Breast epithelium (tissue), 4 donors: ENCODE measurements at regions of chr7 and their contacts with region 1.

Region 1: DNA sequence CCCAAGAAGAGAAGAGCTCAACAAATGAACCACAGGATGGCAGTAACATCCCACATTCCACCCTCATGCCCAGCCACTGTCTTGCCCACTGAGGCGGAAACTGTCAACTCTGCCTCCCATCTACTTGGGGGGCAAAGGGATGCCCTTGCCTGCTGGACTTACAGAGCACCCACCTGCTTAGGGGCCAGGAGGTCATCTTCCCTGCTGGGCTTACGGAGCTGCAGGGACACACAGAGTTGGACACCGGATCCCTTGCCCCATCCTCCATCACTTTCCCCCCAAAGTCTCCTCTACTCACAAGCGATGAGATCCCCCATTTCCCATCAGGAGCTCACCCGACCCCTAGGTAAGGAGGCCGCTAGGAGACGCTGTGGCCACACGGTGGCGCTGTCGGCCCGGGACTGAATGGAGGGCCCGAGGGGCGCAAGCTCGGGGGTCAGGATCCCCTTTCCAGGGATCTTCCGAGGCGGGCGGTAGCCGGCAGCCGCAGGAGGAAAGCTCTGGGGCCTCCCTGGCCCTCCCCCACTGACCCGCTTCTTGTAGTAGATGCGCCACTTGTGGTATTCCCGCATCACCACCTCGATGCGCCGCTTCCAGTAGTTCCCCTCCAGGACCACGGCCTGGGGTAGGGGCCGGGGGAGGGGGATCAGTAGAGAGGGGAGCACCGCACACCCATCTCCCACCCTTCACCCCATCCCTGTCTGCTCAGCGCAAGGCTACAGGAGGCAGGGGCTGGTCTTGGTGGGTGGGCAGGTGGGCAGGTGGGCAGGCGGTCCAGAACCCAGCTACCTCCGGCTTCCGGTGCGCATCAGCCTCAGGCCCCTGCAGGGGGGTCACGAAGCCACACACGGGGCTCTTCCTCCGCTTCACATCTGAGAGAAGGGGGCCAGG is 17.3 kb downstream of the MLXIPL start:
- DNase-seq: no peak
- H3K4me3 ChIP-seq: peak overlapping the region in 1 of 3 donors; percentile 49
- H3K27ac ChIP-seq: no peak overlapping the region
- H3K4me1 ChIP-seq: no peaks in the 10 kb centered on the region
- H3K27me3 ChIP-seq: peaks cover 0 to 20% of the 10 kb centered on the region in 2 donors
- CTCF ChIP-seq: peak; percentile 55 to 94 (median 92)
- POLR2A ChIP-seq: no peak

Region 2: DNA sequence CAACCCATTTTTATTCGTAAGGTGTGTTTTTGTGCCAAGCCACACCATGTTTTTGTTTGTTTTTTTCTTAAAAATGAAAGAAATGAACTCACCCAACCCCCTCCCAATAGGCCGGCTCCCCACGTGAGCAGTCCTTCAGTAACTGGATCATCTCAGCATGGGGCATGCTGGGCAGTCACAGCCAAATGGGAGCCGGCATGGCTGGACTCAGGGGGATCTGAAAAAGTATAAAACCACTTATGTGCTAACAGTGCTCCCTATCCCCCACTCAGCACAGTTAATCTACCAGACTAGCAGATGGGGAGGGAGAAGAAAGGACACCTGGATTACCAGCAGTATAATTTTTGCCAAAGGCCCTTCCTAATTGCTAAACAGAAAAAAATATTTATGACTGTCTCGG is 124.3 kb before region 1 on chr7:
- intact Hi-C with region 1: no loop called
- DNase-seq: no peak
- H3K4me3 ChIP-seq: no peak overlapping the region
- H3K27ac ChIP-seq: no peak overlapping the region
- H3K4me1 ChIP-seq: no peaks in the 10 kb centered on the region
- H3K27me3 ChIP-seq: no peaks in the 10 kb centered on the region
- CTCF ChIP-seq: no peak
- POLR2A ChIP-seq: no peak

Region 3: DNA sequence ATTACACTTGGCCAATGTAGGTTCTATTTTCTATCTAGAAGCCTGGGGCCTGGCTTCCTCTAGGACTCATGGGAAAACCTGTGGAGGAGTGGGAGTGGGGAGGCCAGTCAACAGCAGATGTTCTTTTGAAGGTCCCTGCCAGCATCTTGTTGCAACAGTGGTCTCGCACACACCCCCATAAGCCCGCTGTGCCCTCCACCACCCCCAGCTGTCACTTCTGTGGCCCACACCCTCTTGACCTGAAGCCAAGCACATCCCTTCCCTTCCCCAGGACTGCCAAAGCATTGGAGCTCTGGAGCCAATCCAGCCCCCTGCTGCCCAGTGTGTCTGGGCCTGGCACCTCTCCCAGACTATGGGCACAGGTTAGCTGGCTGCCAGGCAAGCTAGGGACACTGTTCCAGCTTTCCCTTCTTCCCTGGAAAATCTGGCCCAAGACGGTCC is 114.4 kb after region 1 on chr7:
- intact Hi-C with region 1: loop called (anchors 10 kb)
- DNase-seq: peak; percentile 84 to 85
- H3K4me3 ChIP-seq: no peak overlapping the region
- H3K27ac ChIP-seq: peak overlapping the region; percentile 10 to 61
- H3K4me1 ChIP-seq: peaks cover 4 to 7% of the 10 kb centered on the region in 2 donors
- H3K27me3 ChIP-seq: no peaks in the 10 kb centered on the region
- CTCF ChIP-seq: no peak
- POLR2A ChIP-seq: no peak

Region 4: GRCh38 chr7:73842247-73842895 is 235.3 kb after region 1 on chr7 and contains the start of gene METTL27:
- intact Hi-C with region 1: loop called (anchors 10 kb)
- DNase-seq: peak; percentile 94 to 95
- H3K4me3 ChIP-seq: peak within 1 kb of the TSS; percentile 59 to 89 (median 69)
- H3K27ac ChIP-seq: peak within 1 kb of the TSS; percentile 94
- H3K4me1 ChIP-seq: no peaks in the 10 kb centered on the region
- H3K27me3 ChIP-seq: no peaks in the 10 kb centered on the region
- CTCF ChIP-seq: no peak
- POLR2A ChIP-seq: peak; percentile 69
- total RNA-seq, gene METTL27: 1.6 to 10.6 (median 7.0) TPM